ENCODE measurements at regions of chr16 and their contacts with region 1.

Region 1: GRCh38 chr16:55842369-55843104 is 9.6 kb upstream of the CES1 start:
- ATAC-seq: peak; percentile 46 to 70 (median 60)
- H3K4me3 ChIP-seq: no peak overlapping the region
- H3K27ac ChIP-seq: no peak overlapping the region
- H3K4me1 ChIP-seq: no peaks in the 10 kb centered on the region

Region 2: GRCh38 chr16:55701442-55702319 is 140.9 kb before region 1 on chr16:
- in situ Hi-C with region 1: loop called in 5 of 9 experiments (anchors 10 to 25 kb)
- ATAC-seq: peak; percentile 43 to 92 (median 64)
- H3K4me3 ChIP-seq: no peak overlapping the region
- H3K27ac ChIP-seq: no peak overlapping the region
- H3K4me1 ChIP-seq: no peaks in the 10 kb centered on the region